ENCODE measurements at regions of chr10 and their contacts with region 1.

Region 1: DNA sequence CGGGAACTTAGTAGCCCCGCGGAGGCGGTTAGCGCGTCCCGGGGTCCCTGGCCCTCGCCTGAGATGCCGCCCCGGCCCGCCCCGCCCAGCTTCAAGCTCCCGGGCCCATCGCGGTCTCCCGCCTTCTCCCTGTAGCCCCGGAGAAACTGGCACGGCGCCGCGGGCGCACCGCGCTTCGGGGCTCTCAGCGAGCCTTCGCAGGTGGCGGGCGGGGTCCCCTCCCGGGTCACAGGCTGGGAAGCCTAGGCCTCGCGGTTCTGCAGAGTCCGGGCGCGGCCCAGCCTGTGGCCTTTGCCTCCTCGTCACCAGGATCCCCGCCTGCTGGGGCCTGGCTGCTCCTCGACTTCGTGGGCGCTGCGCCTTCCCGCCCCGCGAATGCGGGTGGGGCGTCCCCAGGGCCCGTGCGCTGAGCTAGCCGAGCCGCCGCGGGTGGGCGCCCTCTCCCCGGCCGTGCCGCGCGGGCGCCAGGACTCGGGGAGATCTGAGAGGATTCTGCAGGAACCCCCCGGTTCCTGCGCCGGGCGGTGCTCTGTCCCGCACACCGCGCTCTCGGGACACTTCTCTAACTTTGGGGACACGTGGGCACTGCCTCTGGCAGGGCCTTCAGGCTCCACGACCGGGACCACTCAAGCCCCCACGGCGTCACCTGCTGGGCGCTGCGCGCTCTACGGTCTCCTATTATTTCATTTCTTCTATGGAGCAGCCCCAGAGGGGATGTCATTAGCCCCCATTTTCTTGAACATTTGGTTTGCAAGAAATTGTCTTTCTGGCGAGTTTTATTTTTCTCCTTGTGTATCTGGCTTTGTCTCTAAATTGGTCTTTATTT is 682 bp upstream of the RGS10 start:
- DNase-seq: peak; percentile 56
- ATAC-seq: peak; percentile 42
- H3K4me3 ChIP-seq: peak overlapping the region; percentile 79
- H3K27ac ChIP-seq: 0 out of 2 replicates have a peak overlapping the region, but pooled peaks have one; percentile 3
- H3K4me1 ChIP-seq: peaks cover 27% of the 10 kb centered on the region
- H3K27me3 ChIP-seq: no peaks in the 10 kb centered on the region
- CTCF ChIP-seq: peak; percentile 72

Region 2: GRCh38 chr10:119100811-119101238 is 442.4 kb before region 1 on chr10:
- CTCF ChIA-PET with region 1: no interaction called
- POLR2A ChIA-PET with region 1: no interaction called
- intact Hi-C with region 1: no loop called
- DNase-seq: peak; percentile 30
- ATAC-seq: no peak; the same call in 1 of the 2 replicates
- H3K4me3 ChIP-seq: no peak overlapping the region
- H3K27ac ChIP-seq: peak overlapping the region; percentile 6; the same call in 1 of the 2 replicates
- H3K4me1 ChIP-seq: peaks cover 16% of the 10 kb centered on the region
- H3K27me3 ChIP-seq: no peaks in the 10 kb centered on the region
- CTCF ChIP-seq: no peak

Region 3: GRCh38 chr10:119199231-119199992 is 343.8 kb before region 1 on chr10:
- CTCF ChIA-PET with region 1: interaction called, 3 read pairs
- POLR2A ChIA-PET with region 1: no interaction called
- intact Hi-C with region 1: loop called (anchors 2 kb)
- DNase-seq: peak; percentile 70
- ATAC-seq: peak; percentile 88
- H3K4me3 ChIP-seq: no peak overlapping the region
- H3K27ac ChIP-seq: no peak overlapping the region
- H3K4me1 ChIP-seq: peaks cover 18% of the 10 kb centered on the region
- H3K27me3 ChIP-seq: no peaks in the 10 kb centered on the region
- CTCF ChIP-seq: peak; percentile 76

Region 4: GRCh38 chr10:119305860-119306513 is 237.2 kb before region 1 on chr10:
- CTCF ChIA-PET with region 1: no interaction called
- POLR2A ChIA-PET with region 1: no interaction called
- intact Hi-C with region 1: loop called (anchors 5 kb)
- DNase-seq: peak; percentile 89
- ATAC-seq: peak; percentile 88
- H3K4me3 ChIP-seq: no peak overlapping the region; the same call in 1 of the 2 replicates
- H3K27ac ChIP-seq: peak overlapping the region; percentile 65
- H3K4me1 ChIP-seq: peaks cover 58% of the 10 kb centered on the region
- H3K27me3 ChIP-seq: no peaks in the 10 kb centered on the region
- CTCF ChIP-seq: no peak

Region 5: GRCh38 chr10:119494236-119495060 is 48.8 kb before region 1 on chr10:
- CTCF ChIA-PET with region 1: interaction called, 4 read pairs
- POLR2A ChIA-PET with region 1: no interaction called
- intact Hi-C with region 1: loop called (anchors 1 kb)
- DNase-seq: peak; percentile 67
- ATAC-seq: peak; percentile 79
- H3K4me3 ChIP-seq: no peak overlapping the region
- H3K27ac ChIP-seq: peak overlapping the region; percentile 70
- H3K4me1 ChIP-seq: peaks cover 18% of the 10 kb centered on the region
- H3K27me3 ChIP-seq: no peaks in the 10 kb centered on the region
- CTCF ChIP-seq: no peak